PC-9 (cell line): ENCODE measurements at regions of chr5 and their contacts with region 1.

Region 1: GRCh38 chr5:150778517-150779396 is at the start of gene SMIM3:
- DNase-seq: peak; percentile 55 to 83
- H3K4me3 ChIP-seq: peak within 1 kb of the TSS; percentile 73
- H3K27ac ChIP-seq: no peak within 1 kb of the TSS
- H3K4me1 ChIP-seq: peaks cover 36% of the 10 kb centered on the region
- H3K27me3 ChIP-seq: no peaks in the 10 kb centered on the region
- CTCF ChIP-seq: peak; percentile 35; the same call in 1 of the 2 replicates
- total RNA-seq, gene SMIM3: 11.5 and 12.1 TPM in 2 replicates

Region 2: DNA sequence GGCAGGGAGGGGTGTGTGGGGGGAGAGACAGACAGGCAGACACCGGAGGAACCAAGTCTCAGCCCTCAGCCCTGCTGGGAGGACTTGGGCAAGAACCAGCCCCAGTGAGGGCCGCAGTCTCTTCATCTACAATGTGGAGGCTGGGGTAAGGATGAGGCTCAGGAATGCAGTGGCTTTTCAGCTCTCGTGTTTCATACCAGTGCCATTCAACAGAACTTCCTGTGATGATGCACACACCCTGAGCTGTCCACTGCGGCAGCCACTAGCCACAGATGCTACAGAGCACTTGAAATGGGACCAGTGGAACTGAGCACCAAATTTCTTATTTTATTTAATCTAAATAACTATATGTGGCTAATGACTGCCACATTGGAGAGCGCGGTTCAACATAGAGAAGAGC is 499.8 kb before region 1 on chr5:
- CTCF ChIA-PET with region 1: no interaction called
- POLR2A ChIA-PET with region 1: no interaction called
- intact Hi-C with region 1: no loop called
- DNase-seq: peak; percentile 30 to 42
- H3K4me3 ChIP-seq: no peak overlapping the region
- H3K27ac ChIP-seq: no peak overlapping the region
- H3K4me1 ChIP-seq: no peaks in the 10 kb centered on the region
- H3K27me3 ChIP-seq: no peaks in the 10 kb centered on the region
- CTCF ChIP-seq: no peak

Region 3: GRCh38 chr5:150675069-150675468 is 103.7 kb before region 1 on chr5:
- CTCF ChIA-PET with region 1: no interaction called
- POLR2A ChIA-PET with region 1: interaction called, 17 read pairs
- intact Hi-C with region 1: no loop called
- DNase-seq: no peak
- H3K4me3 ChIP-seq: no peak overlapping the region
- H3K27ac ChIP-seq: no peak overlapping the region
- H3K4me1 ChIP-seq: no peaks in the 10 kb centered on the region
- H3K27me3 ChIP-seq: no peaks in the 10 kb centered on the region
- CTCF ChIP-seq: no peak

Region 4: DNA sequence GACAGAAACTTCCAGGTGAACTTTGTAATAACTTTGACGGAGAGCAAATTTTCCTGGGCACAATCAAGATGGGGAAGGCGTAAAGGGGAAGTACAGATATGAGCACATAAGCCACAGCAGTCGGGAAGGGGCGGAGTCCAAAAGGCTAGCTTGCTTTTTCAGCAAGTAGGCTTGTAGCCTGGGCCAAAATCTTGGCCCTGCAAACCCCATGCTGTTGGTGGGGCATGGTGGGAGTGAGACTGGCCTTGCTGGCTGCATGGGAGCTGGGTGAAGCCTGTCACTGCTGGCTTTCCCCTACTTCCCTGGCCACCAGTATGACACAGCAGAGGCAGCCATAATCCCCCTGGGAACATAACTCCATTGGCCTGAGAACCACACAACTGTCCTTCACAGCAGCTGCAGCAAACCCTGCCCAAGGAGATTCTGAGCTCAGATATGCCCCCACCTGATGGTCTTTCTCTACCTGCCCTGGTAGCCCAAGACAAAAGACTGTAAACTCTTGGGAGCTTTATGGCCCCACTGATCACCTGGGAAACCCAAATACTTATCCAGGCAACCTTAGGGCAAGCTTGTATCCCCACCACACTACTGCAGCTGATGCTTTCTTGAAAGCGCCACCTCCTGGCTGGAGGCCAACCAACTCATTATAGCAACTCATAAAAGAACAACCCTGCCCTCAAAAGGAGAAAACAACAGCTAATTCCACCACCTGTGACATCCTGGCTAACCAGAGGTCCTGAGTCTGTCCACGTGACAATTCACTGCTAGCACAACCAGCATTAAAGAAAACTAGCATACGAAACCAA is 44.0 kb before region 1 on chr5:
- CTCF ChIA-PET with region 1: no interaction called
- POLR2A ChIA-PET with region 1: interaction called, 18 read pairs
- intact Hi-C with region 1: no loop called
- DNase-seq: no peak
- H3K4me3 ChIP-seq: no peak overlapping the region
- H3K27ac ChIP-seq: no peak overlapping the region
- H3K4me1 ChIP-seq: no peaks in the 10 kb centered on the region
- H3K27me3 ChIP-seq: no peaks in the 10 kb centered on the region
- CTCF ChIP-seq: no peak

Region 5: DNA sequence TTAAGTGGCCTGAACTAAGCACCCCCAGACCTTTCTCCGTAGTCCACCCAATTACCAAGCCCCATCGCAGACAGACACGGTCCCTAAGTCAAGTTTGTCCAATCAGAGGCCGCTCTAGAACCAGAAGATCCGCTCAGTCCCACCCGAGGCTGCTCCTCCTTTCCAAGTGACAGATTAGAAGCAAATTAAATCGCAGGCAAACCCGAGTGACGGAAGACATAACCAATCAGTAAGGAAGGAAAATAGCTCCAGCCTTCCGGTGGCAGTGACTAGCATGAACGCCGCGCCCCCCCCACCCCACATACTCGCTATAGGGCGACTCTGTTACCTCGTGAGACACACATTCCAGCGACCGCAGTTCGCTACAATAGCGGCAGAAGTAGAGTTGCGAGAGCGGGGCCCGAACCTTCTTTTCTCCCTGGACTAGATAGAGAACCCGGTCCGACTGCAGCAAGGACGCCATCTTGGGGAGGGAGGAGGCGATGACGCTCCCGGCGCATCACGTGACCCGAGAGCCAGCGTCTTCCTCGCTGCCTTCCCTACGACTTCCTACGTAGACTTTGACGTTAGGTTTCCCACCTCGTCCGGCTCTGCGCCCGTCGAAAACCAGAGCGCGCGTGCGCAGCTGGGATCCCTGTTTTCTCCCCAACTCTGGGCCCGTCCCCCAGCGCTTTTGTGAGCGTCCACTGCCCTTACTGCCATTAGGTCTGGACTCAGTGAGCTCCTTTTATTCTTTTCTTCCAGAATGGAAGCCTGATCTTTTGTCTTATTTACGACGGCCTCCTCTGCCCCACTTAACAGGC is 20.0 kb before region 1 on chr5 and contains the start of gene DCTN4:
- CTCF ChIA-PET with region 1: interaction called, 3 read pairs
- POLR2A ChIA-PET with region 1: interaction called, 6 read pairs
- intact Hi-C with region 1: loop called (anchors 1 kb)
- DNase-seq: peak; percentile 94 to 97
- H3K4me3 ChIP-seq: peak within 1 kb of the TSS; percentile 79
- H3K27ac ChIP-seq: peak within 1 kb of the TSS; percentile 73
- H3K4me1 ChIP-seq: peaks cover 24% of the 10 kb centered on the region
- H3K27me3 ChIP-seq: no peaks in the 10 kb centered on the region
- CTCF ChIP-seq: peak; percentile 55; the same call in 1 of the 2 replicates
- total RNA-seq, gene DCTN4: 49.1 and 54.1 TPM in 2 replicates

Region 6: GRCh38 chr5:150809363-150809762 is 30.6 kb after region 1 on chr5:
- CTCF ChIA-PET with region 1: no interaction called
- POLR2A ChIA-PET with region 1: no interaction called
- intact Hi-C with region 1: no loop called
- DNase-seq: no peak
- H3K4me3 ChIP-seq: no peak overlapping the region
- H3K27ac ChIP-seq: no peak overlapping the region
- H3K4me1 ChIP-seq: no peaks in the 10 kb centered on the region
- H3K27me3 ChIP-seq: peaks cover 18% of the 10 kb centered on the region; the same call in 1 of the 2 replicates
- CTCF ChIP-seq: no peak

Region 7: GRCh38 chr5:150989695-150990094 is 210.9 kb after region 1 on chr5:
- CTCF ChIA-PET with region 1: no interaction called
- POLR2A ChIA-PET with region 1: no interaction called
- intact Hi-C with region 1: no loop called
- DNase-seq: peak in 1 of 2 experiments; percentile 10
- H3K4me3 ChIP-seq: no peak overlapping the region
- H3K27ac ChIP-seq: no peak overlapping the region
- H3K4me1 ChIP-seq: no peaks in the 10 kb centered on the region
- H3K27me3 ChIP-seq: peaks cover 4% of the 10 kb centered on the region; the same call in 1 of the 2 replicates
- CTCF ChIP-seq: peak; percentile 39; the same call in 1 of the 2 replicates